ENCODE measurements at regions of chr18 and their contacts with region 1.

Region 1: GRCh38 chr18:57881818-57882413 is 78.8 kb upstream of the ATP8B1 start:
- DNase-seq: peak; percentile 11 to 70 (median 30)
- ATAC-seq: peak; percentile 66
- H3K4me3 ChIP-seq: no peak overlapping the region
- H3K4me3 Mint-ChIP-seq: no peak overlapping the region
- H3K27ac ChIP-seq: no peak overlapping the region
- H3K27ac Mint-ChIP-seq: no peak overlapping the region
- H3K4me1 ChIP-seq: no peaks in the 10 kb centered on the region
- H3K4me1 Mint-ChIP-seq: no peaks in the 10 kb centered on the region
- H3K27me3 ChIP-seq: peaks cover 0 to 2% of the 10 kb centered on the region in 2 experiments
- H3K27me3 Mint-ChIP-seq: peaks cover 16% of the 10 kb centered on the region
- CTCF ChIP-seq: peak; percentile 84

Region 2: DNA sequence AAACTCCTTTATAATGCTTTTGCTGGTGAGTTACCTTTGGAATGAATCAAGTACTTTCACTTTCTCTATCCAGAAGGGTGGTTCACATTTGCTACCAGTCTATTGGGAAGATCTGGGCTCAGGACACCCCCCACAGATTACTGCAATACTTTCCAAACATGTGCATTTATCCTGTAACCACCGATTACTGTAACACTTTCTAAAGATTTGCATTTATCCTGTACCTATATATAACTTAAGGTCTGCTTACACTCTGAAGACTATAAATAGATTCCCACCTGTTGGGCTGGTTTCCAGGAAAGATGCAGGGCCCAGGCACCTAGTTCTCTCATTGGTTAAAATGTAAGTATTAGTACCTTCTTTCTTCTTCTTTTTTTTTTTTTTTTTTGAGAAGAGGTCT is 49.1 kb after region 1 on chr18:
- CTCF ChIA-PET with region 1: no interaction called
- POLR2A ChIA-PET with region 1: no interaction called
- intact Hi-C with region 1: no loop called
- DNase-seq: no peak
- ATAC-seq: no peak
- H3K4me3 ChIP-seq: no peak overlapping the region
- H3K4me3 Mint-ChIP-seq: no peak overlapping the region
- H3K27ac ChIP-seq: no peak overlapping the region
- H3K27ac Mint-ChIP-seq: no peak overlapping the region
- H3K4me1 ChIP-seq: no peaks in the 10 kb centered on the region
- H3K4me1 Mint-ChIP-seq: no peaks in the 10 kb centered on the region
- H3K27me3 ChIP-seq: no peaks in the 10 kb centered on the region
- H3K27me3 Mint-ChIP-seq: no peaks in the 10 kb centered on the region
- CTCF ChIP-seq: no peak

Region 3: DNA sequence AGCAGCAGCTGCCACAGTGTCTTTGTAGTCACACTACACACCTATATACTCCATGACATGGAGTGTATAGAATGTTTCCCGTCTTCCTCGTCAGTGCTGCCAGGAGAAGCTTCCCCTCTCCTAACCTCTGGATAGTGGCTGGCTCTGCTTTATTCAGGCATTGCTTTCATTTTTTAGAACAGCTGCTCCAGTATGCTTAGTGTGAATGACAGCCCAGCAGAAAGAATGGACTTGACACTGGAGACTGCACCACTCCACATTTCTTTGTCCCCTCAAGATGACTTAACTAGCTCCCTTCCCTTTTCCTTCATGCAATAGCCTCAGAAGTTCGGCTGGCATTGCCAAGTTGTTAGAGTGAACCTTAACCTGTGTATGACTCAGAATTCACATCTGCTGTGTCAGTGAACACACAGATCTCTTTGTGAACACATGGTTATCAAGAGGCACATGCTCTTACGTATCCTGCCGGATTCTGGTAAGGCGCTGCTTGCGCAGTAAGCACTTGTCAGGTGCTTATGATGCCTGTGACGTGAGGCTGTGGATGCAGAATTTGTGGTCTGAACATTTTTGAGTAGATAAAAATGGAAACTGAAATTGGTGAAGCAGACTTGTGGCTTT is 236.0 kb after region 1 on chr18:
- CTCF ChIA-PET with region 1: interaction called, 8 read pairs
- POLR2A ChIA-PET with region 1: no interaction called
- intact Hi-C with region 1: loop called (anchors 1 to 2 kb)
- DNase-seq: peak in 1 of 14 experiments; percentile 7
- ATAC-seq: no peak
- H3K4me3 ChIP-seq: no peak overlapping the region
- H3K4me3 Mint-ChIP-seq: no peak overlapping the region
- H3K27ac ChIP-seq: no peak overlapping the region
- H3K27ac Mint-ChIP-seq: no peak overlapping the region
- H3K4me1 ChIP-seq: no peaks in the 10 kb centered on the region
- H3K4me1 Mint-ChIP-seq: no peaks in the 10 kb centered on the region
- H3K27me3 ChIP-seq: no peaks in the 10 kb centered on the region
- H3K27me3 Mint-ChIP-seq: no peaks in the 10 kb centered on the region
- CTCF ChIP-seq: no peak

Region 4: GRCh38 chr18:58180738-58181353 is 298.9 kb after region 1 on chr18:
- CTCF ChIA-PET with region 1: no interaction called
- POLR2A ChIA-PET with region 1: no interaction called
- intact Hi-C with region 1: loop called (anchors 5 kb)
- DNase-seq: peak; percentile 33 to 77 (median 54)
- ATAC-seq: peak; percentile 51
- H3K4me3 ChIP-seq: no peak overlapping the region
- H3K4me3 Mint-ChIP-seq: no peak overlapping the region
- H3K27ac ChIP-seq: no peak overlapping the region
- H3K27ac Mint-ChIP-seq: no peak overlapping the region
- H3K4me1 ChIP-seq: no peaks in the 10 kb centered on the region
- H3K4me1 Mint-ChIP-seq: no peaks in the 10 kb centered on the region
- H3K27me3 ChIP-seq: no peaks in the 10 kb centered on the region
- H3K27me3 Mint-ChIP-seq: peaks cover 6% of the 10 kb centered on the region
- CTCF ChIP-seq: peak; percentile 85

Region 5: DNA sequence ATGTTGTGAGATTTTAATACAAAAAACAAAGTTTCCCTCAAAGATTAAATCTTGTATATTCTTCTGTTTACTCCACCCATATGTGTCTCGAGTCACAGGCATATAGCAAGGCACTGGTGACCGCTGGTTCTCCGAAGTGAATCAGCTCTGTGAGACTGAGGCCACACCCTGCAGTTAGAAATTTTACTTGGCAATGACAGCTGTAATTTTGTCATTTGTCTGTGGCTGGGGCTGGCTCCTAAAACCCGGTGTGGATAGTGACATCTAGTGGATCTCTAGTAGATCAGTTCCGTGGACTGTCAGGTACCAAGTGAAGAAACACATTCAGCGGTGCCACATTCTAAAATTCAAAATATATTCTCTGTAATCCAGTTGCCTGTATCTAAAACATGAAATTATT is 440.1 kb after region 1 on chr18:
- CTCF ChIA-PET with region 1: no interaction called
- POLR2A ChIA-PET with region 1: no interaction called
- intact Hi-C with region 1: loop called (anchors 2 to 5 kb)
- DNase-seq: peak; percentile 24 to 80 (median 48)
- ATAC-seq: peak; percentile 96
- H3K4me3 ChIP-seq: no peak overlapping the region
- H3K4me3 Mint-ChIP-seq: peak overlapping the region; percentile 72
- H3K27ac ChIP-seq: no peak overlapping the region
- H3K27ac Mint-ChIP-seq: peak overlapping the region; percentile 83
- H3K4me1 ChIP-seq: peaks cover 11% of the 10 kb centered on the region
- H3K4me1 Mint-ChIP-seq: peaks cover 21% of the 10 kb centered on the region
- H3K27me3 ChIP-seq: no peaks in the 10 kb centered on the region
- H3K27me3 Mint-ChIP-seq: no peaks in the 10 kb centered on the region
- CTCF ChIP-seq: peak; percentile 52

Region 6: GRCh38 chr18:58493516-58494253 is 611.8 kb after region 1 on chr18:
- CTCF ChIA-PET with region 1: no interaction called
- POLR2A ChIA-PET with region 1: no interaction called
- intact Hi-C with region 1: loop called in 1 of 2 experiments (anchors 5 kb)
- DNase-seq: peak; percentile 48 to 83 (median 58)
- ATAC-seq: peak; percentile 96
- H3K4me3 ChIP-seq: no peak overlapping the region
- H3K4me3 Mint-ChIP-seq: no peak overlapping the region
- H3K27ac ChIP-seq: no peak overlapping the region
- H3K27ac Mint-ChIP-seq: no peak overlapping the region
- H3K4me1 ChIP-seq: peaks cover 6% of the 10 kb centered on the region
- H3K4me1 Mint-ChIP-seq: peaks cover 7% of the 10 kb centered on the region
- H3K27me3 ChIP-seq: peaks cover 2 to 6% of the 10 kb centered on the region in 2 experiments
- H3K27me3 Mint-ChIP-seq: peaks cover 38% of the 10 kb centered on the region
- CTCF ChIP-seq: peak; percentile 86

Region 7: DNA sequence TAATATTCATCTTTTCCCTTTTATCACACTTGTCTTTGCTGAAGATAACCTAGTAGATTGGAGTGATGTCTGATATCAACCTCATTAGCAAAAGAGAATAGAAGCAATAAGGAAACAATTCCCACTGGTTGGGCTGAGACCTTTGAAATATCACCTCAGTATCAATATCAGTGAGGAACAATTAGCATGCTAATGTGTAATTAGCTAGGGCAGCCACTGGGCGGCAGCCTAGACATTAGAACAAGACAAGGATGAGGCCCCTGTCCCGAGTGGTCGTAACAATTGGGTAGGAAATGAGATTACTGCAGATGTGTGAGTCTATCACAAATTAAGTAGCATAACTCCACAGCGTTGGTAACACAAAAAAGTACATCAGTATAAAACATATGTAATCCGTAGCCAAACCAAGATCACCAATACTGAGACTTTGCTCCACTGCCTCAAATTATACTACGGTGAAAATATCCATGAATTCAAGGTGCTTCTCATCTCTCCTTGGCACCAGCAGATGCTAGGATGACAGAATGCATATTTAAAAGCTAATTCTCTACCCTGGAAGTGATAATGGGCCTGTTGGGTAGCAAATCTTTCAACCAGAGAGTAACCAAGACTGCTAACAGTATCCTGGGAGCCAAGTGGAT is 647.9 kb after region 1 on chr18:
- CTCF ChIA-PET with region 1: no interaction called
- POLR2A ChIA-PET with region 1: no interaction called
- intact Hi-C with region 1: no loop called
- DNase-seq: peak; percentile 48 to 78 (median 66)
- ATAC-seq: peak; percentile 88
- H3K4me3 ChIP-seq: no peak overlapping the region
- H3K4me3 Mint-ChIP-seq: no peak overlapping the region
- H3K27ac ChIP-seq: no peak overlapping the region
- H3K27ac Mint-ChIP-seq: no peak overlapping the region
- H3K4me1 ChIP-seq: peaks cover 4% of the 10 kb centered on the region
- H3K4me1 Mint-ChIP-seq: peaks cover 5% of the 10 kb centered on the region
- H3K27me3 ChIP-seq: no peaks in the 10 kb centered on the region
- H3K27me3 Mint-ChIP-seq: no peaks in the 10 kb centered on the region
- CTCF ChIP-seq: peak; percentile 96

Measured in CD4-positive, alpha-beta T cell (primary cell).